Activated T-helper 1 cell treated with anti-CD3 and anti-CD28 coated beads, Interleukin-12 subunit alpha, Interleukin-12 subunit beta, Interleukin-2, Interleukin-4 antibody, amounts not matched to agents 30 ng/mL and 10 ng/mL and 1 ng/mL, durations not matched to agents 14 hours and 24 hours and 36 hours (primary cell): ENCODE measurements at regions of chr3 and their contacts with region 1.

Region 1: GRCh38 chr3:189233225-189233858 is 61.6 kb downstream of the TPRG1 start:
- DNase-seq: no peak
- H3K4me3 Mint-ChIP-seq: no peak overlapping the region
- H3K27ac Mint-ChIP-seq: no peak overlapping the region
- H3K4me1 Mint-ChIP-seq: peaks cover 24% of the 10 kb centered on the region
- H3K27me3 Mint-ChIP-seq: peaks cover 12% of the 10 kb centered on the region

Region 2: GRCh38 chr3:188720636-188721035 is 512.7 kb before region 1 on chr3:
- intact Hi-C with region 1: loop called (anchors 10 kb)
- DNase-seq: no peak
- H3K4me3 Mint-ChIP-seq: no peak overlapping the region
- H3K27ac Mint-ChIP-seq: no peak overlapping the region
- H3K4me1 Mint-ChIP-seq: peaks cover 35% of the 10 kb centered on the region
- H3K27me3 Mint-ChIP-seq: peaks cover 2% of the 10 kb centered on the region

Region 3: DNA sequence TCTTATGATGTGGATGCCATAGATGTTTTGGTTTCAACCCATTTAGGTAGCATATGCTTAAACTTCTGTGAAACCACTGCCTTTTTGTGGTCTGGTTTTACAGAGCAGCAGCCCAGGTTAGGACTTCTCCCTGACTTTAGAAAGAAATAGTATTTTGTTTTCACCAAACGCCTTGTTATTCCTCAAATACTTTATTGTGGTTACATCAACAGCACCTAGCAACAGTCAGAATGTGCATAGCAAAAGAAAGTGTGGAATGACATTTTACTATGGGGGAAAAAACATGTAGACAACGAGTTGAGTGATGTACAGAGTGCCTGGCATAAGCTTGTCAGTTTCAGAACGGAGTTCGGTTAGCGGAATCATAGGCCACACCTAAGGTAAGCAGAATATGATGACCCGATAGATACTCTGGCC is 97.7 kb after region 1 on chr3:
- intact Hi-C with region 1: loop called (anchors 1 kb)
- DNase-seq: no peak
- H3K4me3 Mint-ChIP-seq: peak overlapping the region; percentile 48
- H3K27ac Mint-ChIP-seq: peak overlapping the region; percentile 73
- H3K4me1 Mint-ChIP-seq: peaks cover 58% of the 10 kb centered on the region
- H3K27me3 Mint-ChIP-seq: no peaks in the 10 kb centered on the region